ENCODE measurements at regions of chr5 and their contacts with region 1.

Region 1: GRCh38 chr5:141740885-141741284 is 58.9 kb upstream of the ARAP3 start:
- DNase-seq: no peak
- ATAC-seq: no peak
- H3K4me3 ChIP-seq: no peak overlapping the region
- H3K27ac ChIP-seq: no peak overlapping the region
- H3K4me1 ChIP-seq: no peaks in the 10 kb centered on the region
- H3K27me3 ChIP-seq: peaks cover 2% of the 10 kb centered on the region; the same call in 1 of the 2 replicates
- CTCF ChIP-seq: no peak

Region 2: DNA sequence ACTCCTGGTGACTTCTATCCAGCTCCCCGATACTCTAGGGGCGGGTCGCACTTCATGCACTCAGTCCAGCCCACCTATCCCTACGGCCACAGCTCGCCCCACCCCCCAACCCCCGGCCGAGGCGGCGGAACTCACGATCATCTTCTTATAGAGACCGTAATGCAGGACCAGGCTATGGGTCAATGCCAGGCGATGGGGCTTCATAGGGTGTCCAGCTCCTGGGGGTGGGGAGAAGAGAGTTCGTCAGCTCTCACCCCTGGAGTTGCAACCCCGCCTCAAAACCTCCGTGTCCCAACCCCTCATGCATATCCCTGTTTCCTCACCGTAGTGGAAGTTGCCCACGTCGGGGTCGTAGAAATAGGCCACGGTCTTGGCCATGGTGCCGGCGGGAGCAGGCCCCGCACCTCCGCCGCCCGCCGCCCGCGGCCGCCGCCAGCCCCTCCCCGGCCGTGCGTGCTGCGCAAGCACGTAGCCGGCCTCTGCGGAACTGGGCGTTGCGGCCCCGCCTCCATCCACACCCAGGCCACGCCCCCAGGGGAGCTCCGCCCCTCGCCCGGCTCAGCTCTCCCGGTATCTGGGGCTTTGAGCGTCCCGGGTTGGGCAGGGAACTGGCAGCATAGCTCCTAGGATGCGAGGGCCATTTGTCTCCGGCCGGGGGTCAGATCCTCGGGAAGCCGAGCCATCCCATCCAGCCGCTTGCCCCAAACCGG is 104.3 kb before region 1 on chr5 and contains the starts of genes HDAC3 and RELL2:
- CTCF ChIA-PET with region 1: no interaction called
- POLR2A ChIA-PET with region 1: no interaction called
- in situ Hi-C with region 1: no loop called
- intact Hi-C with region 1: no loop called
- DNase-seq: no peak
- ATAC-seq: peak; percentile 96
- H3K4me3 ChIP-seq: peak within 1 kb of the TSS; percentile 84 to 89
- H3K27ac ChIP-seq: peak within 1 kb of the TSS; percentile 87
- H3K4me1 ChIP-seq: peaks cover 11% of the 10 kb centered on the region
- H3K27me3 ChIP-seq: no peaks in the 10 kb centered on the region
- CTCF ChIP-seq: no peak
- total RNA-seq, gene HDAC3: 75.5 TPM
- total RNA-seq, gene RELL2: 13.3 TPM

Region 3: GRCh38 chr5:141757402-141757801 is 16.5 kb after region 1 on chr5:
- CTCF ChIA-PET with region 1: no interaction called
- POLR2A ChIA-PET with region 1: interaction called, 11 read pairs
- in situ Hi-C with region 1: no loop called
- intact Hi-C with region 1: no loop called
- DNase-seq: no peak
- ATAC-seq: peak; percentile 81
- H3K4me3 ChIP-seq: no peak overlapping the region
- H3K27ac ChIP-seq: no peak overlapping the region
- H3K4me1 ChIP-seq: no peaks in the 10 kb centered on the region; the same call in 1 of the 2 replicates
- H3K27me3 ChIP-seq: peaks cover 2% of the 10 kb centered on the region; the same call in 1 of the 2 replicates
- CTCF ChIP-seq: peak; percentile 58; the same call in 1 of the 2 replicates

Region 4: GRCh38 chr5:142432369-142432863 is 691.5 kb after region 1 on chr5:
- CTCF ChIA-PET with region 1: no interaction called
- POLR2A ChIA-PET with region 1: no interaction called
- in situ Hi-C with region 1: no loop called
- intact Hi-C with region 1: no loop called
- DNase-seq: no peak
- ATAC-seq: no peak
- H3K4me3 ChIP-seq: no peak overlapping the region
- H3K27ac ChIP-seq: no peak overlapping the region
- H3K4me1 ChIP-seq: no peaks in the 10 kb centered on the region
- H3K27me3 ChIP-seq: no peaks in the 10 kb centered on the region
- CTCF ChIP-seq: no peak

Measured in Panc1 (cell line).